ENCODE measurements at regions of chr10 and their contacts with region 1.

Region 1: GRCh38 chr10:29496341-29497162 is 138.2 kb downstream of the SVIL start:
- DNase-seq: peak; percentile 66
- H3K4me3 Mint-ChIP-seq: no peak overlapping the region
- H3K27ac Mint-ChIP-seq: no peak overlapping the region
- H3K4me1 Mint-ChIP-seq: no peaks in the 10 kb centered on the region
- H3K27me3 Mint-ChIP-seq: no peaks in the 10 kb centered on the region
- CTCF ChIP-seq: peak; percentile 86

Region 2: DNA sequence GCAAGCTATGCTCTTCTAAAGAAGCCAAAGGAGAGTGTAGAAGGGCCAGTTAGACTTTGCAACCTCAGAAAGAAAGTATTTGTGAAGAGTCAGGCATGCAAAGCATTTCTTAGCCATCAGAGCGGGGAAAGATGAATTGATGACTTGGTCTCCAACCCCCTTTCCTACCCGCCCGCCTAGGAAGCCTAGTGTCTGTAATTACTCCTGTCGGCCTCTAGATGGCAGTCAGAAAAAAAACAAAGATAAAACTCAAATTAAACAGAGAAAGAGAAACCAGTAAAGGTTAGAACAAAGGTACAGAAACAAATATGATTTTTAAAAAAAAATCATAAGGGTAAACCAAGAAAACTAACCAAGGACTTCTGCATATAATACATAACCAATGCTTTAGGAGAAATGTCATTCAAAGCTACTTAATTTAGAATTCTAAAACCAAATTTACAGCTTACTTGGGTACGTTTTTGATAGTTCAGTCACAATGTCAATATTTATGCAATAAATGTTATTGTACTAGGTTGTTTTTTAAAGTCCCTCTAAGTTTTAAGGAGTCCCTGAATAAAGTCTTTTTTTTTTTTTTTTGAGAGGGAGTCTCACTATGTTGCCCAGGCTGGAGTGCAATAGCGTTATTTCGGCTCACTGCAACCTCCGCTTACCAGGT is 110.1 kb before region 1 on chr10:
- CTCF ChIA-PET with region 1: interaction called, 3 read pairs
- POLR2A ChIA-PET with region 1: no interaction called
- intact Hi-C with region 1: loop called (anchors 5 kb)
- DNase-seq: peak; percentile 48
- H3K4me3 Mint-ChIP-seq: no peak overlapping the region
- H3K27ac Mint-ChIP-seq: no peak overlapping the region
- H3K4me1 Mint-ChIP-seq: no peaks in the 10 kb centered on the region
- H3K27me3 Mint-ChIP-seq: peaks cover 17% of the 10 kb centered on the region
- CTCF ChIP-seq: peak; percentile 65

Region 3: GRCh38 chr10:29554660-29555059 is 58.1 kb after region 1 on chr10:
- CTCF ChIA-PET with region 1: no interaction called
- POLR2A ChIA-PET with region 1: no interaction called
- intact Hi-C with region 1: no loop called
- DNase-seq: peak; percentile 17
- H3K4me3 Mint-ChIP-seq: no peak overlapping the region
- H3K27ac Mint-ChIP-seq: no peak overlapping the region
- H3K4me1 Mint-ChIP-seq: peaks cover 12% of the 10 kb centered on the region
- H3K27me3 Mint-ChIP-seq: no peaks in the 10 kb centered on the region
- CTCF ChIP-seq: no peak

Measured in MCF 10A (cell line).